Activated CD8-positive, alpha-beta memory T cell treated with anti-CD3 and anti-CD28 coated beads, Interleukin-2, amount 10 ng/mL, durations not matched to agents 7 days and 5 days (primary cell): ENCODE measurements at regions of chr6 and their contacts with region 1.

Region 1: DNA sequence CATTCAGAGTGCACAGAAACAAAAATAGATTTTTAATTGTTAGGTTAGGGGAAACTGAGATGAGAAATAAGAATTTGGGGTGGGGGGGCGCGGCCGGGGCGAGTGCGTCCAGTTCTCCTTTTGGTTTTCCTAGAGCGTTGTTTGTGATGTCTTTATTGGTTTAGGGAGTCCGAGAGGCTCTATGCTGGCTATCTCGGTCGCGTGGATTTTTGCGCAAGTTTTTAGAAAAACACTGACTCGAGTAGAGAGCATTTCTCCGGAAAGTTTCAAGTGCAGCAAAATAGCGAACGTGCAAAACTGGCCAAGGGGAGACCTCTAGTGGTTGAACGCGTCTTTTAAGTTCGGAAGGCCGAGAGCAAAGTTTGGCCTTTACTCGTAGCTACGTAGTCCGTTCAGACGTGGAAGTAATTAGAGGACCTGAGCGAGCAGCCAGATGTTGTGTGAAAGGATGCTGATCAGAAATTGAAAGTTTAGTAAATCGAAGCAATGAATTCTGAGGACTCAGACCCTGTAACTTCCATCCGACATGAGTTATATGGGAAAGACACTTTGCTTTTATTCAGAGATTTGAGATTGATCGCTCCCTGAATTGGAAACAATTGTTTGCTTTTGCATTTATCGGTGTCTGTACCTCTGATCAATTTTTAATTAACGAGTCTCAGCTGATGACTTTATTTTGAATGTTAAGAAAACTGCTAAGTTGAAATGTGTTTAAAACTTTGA is 2.7 kb downstream of the L3MBTL3 start:
- DNase-seq: peak; percentile 91
- ATAC-seq: peak; percentile 62
- H3K4me3 Mint-ChIP-seq: peak overlapping the region; percentile 93
- H3K27ac Mint-ChIP-seq: peak overlapping the region; percentile 98
- H3K4me1 Mint-ChIP-seq: peaks cover 25% of the 10 kb centered on the region
- H3K27me3 Mint-ChIP-seq: no peaks in the 10 kb centered on the region

Region 2: GRCh38 chr6:129766959-129767728 is 253.9 kb before region 1 on chr6:
- CTCF ChIA-PET with region 1: interaction called, 10 read pairs
- DNase-seq: peak; percentile 84
- ATAC-seq: peak; percentile 90
- H3K4me3 Mint-ChIP-seq: peak overlapping the region; percentile 79
- H3K27ac Mint-ChIP-seq: peak overlapping the region; percentile 5
- H3K4me1 Mint-ChIP-seq: peaks cover 33% of the 10 kb centered on the region
- H3K27me3 Mint-ChIP-seq: peaks cover 63% of the 10 kb centered on the region

Region 3: DNA sequence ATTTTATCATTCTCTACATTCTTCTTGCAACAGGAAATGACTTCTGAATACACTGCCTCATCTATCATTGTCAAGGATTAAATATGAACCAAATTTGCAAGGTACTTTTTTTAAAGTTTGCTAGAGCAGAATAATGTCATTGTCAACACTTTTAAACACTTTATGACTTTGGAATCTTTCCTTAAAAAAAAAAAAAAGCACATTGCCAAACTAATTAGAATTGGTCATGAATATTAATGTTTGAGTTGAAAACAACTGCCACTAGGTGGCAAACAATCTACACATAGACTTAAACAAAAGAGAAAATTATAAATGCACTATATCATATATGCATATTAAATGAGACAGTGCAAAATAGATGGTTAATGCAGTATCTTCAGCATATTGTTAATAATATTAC is 127.4 kb before region 1 on chr6:
- CTCF ChIA-PET with region 1: interaction called, 16 read pairs
- DNase-seq: no peak
- ATAC-seq: peak; percentile 42
- H3K4me3 Mint-ChIP-seq: no peak overlapping the region
- H3K27ac Mint-ChIP-seq: no peak overlapping the region
- H3K4me1 Mint-ChIP-seq: peaks cover 8% of the 10 kb centered on the region
- H3K27me3 Mint-ChIP-seq: peaks cover 3% of the 10 kb centered on the region